A549 (cell line): ENCODE measurements at regions of chr17 and their contacts with region 1.

Region 1: DNA sequence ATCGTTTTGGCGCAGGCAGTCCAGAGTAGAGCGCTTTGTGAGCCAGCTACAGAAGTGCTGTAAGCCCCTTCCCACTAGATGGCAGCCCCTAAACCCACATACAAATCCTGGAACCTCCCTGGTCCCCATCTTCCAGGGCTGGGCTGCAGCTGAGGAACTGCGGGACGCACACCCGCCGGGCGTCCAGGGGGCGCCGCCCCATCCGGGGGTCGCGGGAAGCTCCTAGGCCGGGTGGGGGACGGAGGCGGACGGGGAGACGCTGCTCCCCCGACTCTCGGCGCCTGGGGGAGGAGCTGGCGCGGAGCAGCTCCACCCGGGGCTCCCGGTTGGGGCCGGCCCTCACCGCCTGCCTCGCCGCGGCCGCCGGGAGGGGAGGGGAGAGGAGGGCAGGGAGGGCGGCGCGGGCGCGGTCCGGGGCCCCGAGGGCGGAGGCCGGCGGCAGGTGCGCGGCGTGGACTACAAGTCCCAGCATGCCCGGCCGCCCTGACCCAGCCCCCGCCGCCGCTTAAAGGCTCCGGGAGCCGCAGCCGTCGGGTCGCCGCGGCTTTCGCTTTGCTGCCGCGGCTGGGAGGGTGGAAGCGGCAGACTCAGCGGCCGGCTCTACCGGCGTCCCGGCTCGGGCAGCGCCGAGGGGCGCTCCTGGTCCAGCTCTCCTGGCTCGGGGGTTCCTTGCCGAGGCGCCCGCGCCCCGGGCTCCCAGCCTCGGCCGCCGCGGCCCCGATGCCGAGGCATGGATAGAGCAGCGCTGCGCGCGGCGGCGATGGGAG is at the start of gene KSR1:
- DNase-seq: peak; percentile 82 to 85
- ATAC-seq: peak; percentile 93 to 94
- H3K4me3 ChIP-seq: peak within 1 kb of the TSS; percentile 73
- H3K27ac ChIP-seq: peak within 1 kb of the TSS; percentile 86 to 95
- H3K4me1 ChIP-seq: peaks cover 39% of the 10 kb centered on the region
- CTCF ChIP-seq: peak; percentile 64
- EP300 ChIP-seq: no peak
- POLR2A ChIP-seq: peak; percentile 56
- RAD21 ChIP-seq: peak; percentile 67 to 74
- polyA plus RNA-seq, gene KSR1: 13.3 and 23.0 TPM in 2 replicates

Region 2: DNA sequence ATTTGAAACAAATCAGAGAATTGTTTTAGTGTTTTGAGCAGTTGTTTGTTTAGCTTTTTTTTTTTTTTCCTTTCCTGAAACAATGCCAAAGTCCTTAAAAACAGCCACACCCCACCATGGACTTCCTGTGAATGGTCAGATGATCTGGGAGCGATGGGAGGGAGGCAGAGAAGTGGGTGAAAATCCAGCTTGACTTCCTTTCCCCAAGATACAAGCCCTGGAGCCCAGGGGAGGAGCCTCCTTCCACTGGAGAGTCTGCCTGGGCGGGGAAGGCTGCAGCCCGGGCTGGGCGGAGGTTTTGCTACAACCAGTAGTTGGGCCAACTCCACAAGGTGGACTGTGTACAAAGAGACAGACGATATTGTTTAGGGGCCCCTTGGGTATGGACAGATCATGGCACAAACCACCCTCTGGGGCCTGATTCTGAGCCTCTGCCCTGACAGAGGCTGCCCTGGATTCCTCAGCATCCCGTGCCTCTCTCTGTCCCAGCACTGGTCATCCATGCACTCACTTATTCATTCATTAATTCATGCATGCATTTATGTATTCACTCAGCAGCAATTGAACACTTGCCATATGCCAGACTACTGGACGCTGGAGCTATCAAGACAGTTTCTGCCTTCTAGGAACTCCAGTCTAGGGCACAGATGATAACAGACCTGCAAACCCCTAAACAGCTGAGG is 132.4 kb before region 1 on chr17:
- CTCF ChIA-PET with region 1: no interaction called
- POLR2A ChIA-PET with region 1: no interaction called
- DNase-seq: peak in 1 of 2 experiments; percentile 69
- ATAC-seq: peak; percentile 31 to 70; a peak in 5 of 6 replicates
- H3K4me3 ChIP-seq: no peak overlapping the region
- H3K27ac ChIP-seq: peak overlapping the region in 1 of 2 experiments; percentile 12; a peak in 2 of 6 replicates
- H3K4me1 ChIP-seq: peaks cover 11% of the 10 kb centered on the region; the same call in 2 of the 3 replicates
- CTCF ChIP-seq: no peak
- EP300 ChIP-seq: no peak
- POLR2A ChIP-seq: no peak
- RAD21 ChIP-seq: no peak

Region 3: GRCh38 chr17:27353461-27354050 is 102.5 kb before region 1 on chr17:
- CTCF ChIA-PET with region 1: interaction called, 10 read pairs
- POLR2A ChIA-PET with region 1: interaction called, 7 read pairs
- DNase-seq: peak; percentile 96 to 97
- ATAC-seq: peak; percentile 85 to 93
- H3K4me3 ChIP-seq: peak overlapping the region; percentile 59
- H3K27ac ChIP-seq: peak overlapping the region; percentile 90 to 99
- H3K4me1 ChIP-seq: peaks cover 25% of the 10 kb centered on the region
- CTCF ChIP-seq: peak; percentile 99
- EP300 ChIP-seq: peak; percentile 49 to 64; a peak in 2 of 5 replicates
- POLR2A ChIP-seq: peak; percentile 81
- RAD21 ChIP-seq: peak; percentile 67 to 99

Region 4: GRCh38 chr17:27419156-27419555 is 36.9 kb before region 1 on chr17:
- CTCF ChIA-PET with region 1: no interaction called
- POLR2A ChIA-PET with region 1: no interaction called
- DNase-seq: no peak
- ATAC-seq: no peak
- H3K4me3 ChIP-seq: no peak overlapping the region
- H3K27ac ChIP-seq: no peak overlapping the region
- H3K4me1 ChIP-seq: peaks cover 6% of the 10 kb centered on the region; the same call in 1 of the 3 replicates
- CTCF ChIP-seq: no peak
- EP300 ChIP-seq: no peak
- POLR2A ChIP-seq: no peak
- RAD21 ChIP-seq: no peak

Region 5: GRCh38 chr17:27466743-27467375 is 10.8 kb after region 1 on chr17:
- CTCF ChIA-PET with region 1: interaction called, 15 read pairs
- POLR2A ChIA-PET with region 1: no interaction called
- DNase-seq: no peak
- ATAC-seq: no peak
- H3K4me3 ChIP-seq: no peak overlapping the region
- H3K27ac ChIP-seq: no peak overlapping the region
- H3K4me1 ChIP-seq: peaks cover 44% of the 10 kb centered on the region
- CTCF ChIP-seq: no peak
- EP300 ChIP-seq: no peak
- POLR2A ChIP-seq: no peak
- RAD21 ChIP-seq: no peak

Region 6: DNA sequence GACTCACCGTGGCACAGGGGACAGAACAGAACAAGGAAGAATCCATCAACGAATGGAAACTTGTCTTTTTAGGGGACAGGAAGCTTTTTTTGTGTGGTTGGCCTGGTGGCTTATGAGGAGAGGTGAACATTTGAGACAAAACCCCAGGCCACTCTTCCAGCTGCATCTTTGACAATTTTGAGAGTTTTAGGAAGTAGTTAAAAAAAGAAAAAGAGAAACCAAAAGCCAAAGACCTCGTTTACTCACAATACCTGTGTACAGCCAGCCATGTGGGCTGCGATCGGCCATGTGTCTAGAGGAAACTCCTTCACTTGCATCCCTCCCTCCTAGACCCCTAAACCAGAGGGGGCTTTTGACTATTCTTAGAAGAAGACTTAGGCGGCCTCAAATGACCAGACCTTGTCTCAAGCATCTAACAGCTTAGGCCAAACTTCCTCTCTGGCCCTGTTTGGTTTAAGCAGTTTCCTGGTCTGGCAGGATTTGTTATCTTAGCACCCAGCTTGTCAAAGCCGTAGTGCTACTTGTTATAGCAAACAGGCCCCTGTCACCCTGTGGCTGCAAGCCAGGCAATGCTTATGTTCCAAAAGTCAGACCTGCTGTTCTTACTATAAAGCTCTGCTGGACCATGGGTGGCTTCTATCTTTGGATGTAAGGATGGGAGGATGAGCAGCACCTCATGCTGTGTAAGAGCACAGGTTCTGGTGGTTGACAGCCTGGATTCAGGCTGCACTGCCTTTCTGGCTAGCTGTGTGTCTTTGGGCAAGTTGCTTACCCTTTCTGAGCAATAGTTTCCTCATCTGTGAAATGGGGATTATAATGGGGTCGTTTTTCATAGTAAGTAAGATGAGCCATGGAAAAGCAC is 17.9 kb after region 1 on chr17:
- CTCF ChIA-PET with region 1: interaction called, 15 read pairs
- POLR2A ChIA-PET with region 1: no interaction called
- DNase-seq: no peak
- ATAC-seq: no peak
- H3K4me3 ChIP-seq: no peak overlapping the region
- H3K27ac ChIP-seq: peak overlapping the region in 1 of 2 experiments; percentile 66; a peak in 4 of 6 replicates
- H3K4me1 ChIP-seq: peaks cover 38% of the 10 kb centered on the region
- CTCF ChIP-seq: no peak
- EP300 ChIP-seq: no peak
- POLR2A ChIP-seq: no peak
- RAD21 ChIP-seq: no peak

Region 7: GRCh38 chr17:27544350-27545131 is 88.4 kb after region 1 on chr17:
- CTCF ChIA-PET with region 1: interaction called, 14 read pairs
- POLR2A ChIA-PET with region 1: interaction called, 5 read pairs
- DNase-seq: no peak
- ATAC-seq: no peak
- H3K4me3 ChIP-seq: no peak overlapping the region
- H3K27ac ChIP-seq: peak overlapping the region; percentile 81 to 97
- H3K4me1 ChIP-seq: peaks cover 87% of the 10 kb centered on the region
- CTCF ChIP-seq: no peak
- EP300 ChIP-seq: no peak
- POLR2A ChIP-seq: no peak
- RAD21 ChIP-seq: no peak

Region 8: DNA sequence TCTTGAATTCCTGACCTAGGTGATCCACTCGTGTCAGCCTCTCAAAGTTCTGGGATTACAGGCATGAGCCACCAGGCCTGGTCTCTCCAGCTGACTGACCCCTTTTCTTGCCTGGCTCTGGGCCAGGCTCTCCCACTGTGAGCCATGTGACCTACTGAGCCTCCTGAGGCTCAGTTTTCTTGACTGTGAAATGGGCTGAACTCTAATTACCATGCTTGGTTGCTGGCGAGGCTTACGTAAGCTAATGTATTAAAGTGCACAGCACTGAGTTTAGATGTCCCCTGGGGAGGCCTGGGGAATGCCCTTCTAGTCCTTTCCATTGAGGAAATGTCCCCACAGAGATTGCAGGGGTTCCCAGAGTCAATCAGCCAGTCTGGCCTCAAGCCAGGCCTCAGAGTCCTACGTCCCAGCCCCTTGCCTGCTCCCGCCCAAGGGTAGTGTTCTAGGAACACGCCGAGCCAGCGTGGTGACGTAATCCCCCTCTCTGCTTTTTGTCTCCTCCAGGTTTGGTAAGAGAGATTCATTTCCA is 129.1 kb after region 1 on chr17:
- CTCF ChIA-PET with region 1: interaction called, 12 read pairs
- POLR2A ChIA-PET with region 1: no interaction called
- DNase-seq: no peak
- ATAC-seq: no peak
- H3K4me3 ChIP-seq: no peak overlapping the region
- H3K27ac ChIP-seq: peak overlapping the region; percentile 37 to 74; a peak in 5 of 6 replicates
- H3K4me1 ChIP-seq: peaks cover 27% of the 10 kb centered on the region
- CTCF ChIP-seq: no peak
- EP300 ChIP-seq: no peak
- POLR2A ChIP-seq: no peak
- RAD21 ChIP-seq: no peak